ENCODE measurements at regions of chr6 and their contacts with region 1.

Region 1: DNA sequence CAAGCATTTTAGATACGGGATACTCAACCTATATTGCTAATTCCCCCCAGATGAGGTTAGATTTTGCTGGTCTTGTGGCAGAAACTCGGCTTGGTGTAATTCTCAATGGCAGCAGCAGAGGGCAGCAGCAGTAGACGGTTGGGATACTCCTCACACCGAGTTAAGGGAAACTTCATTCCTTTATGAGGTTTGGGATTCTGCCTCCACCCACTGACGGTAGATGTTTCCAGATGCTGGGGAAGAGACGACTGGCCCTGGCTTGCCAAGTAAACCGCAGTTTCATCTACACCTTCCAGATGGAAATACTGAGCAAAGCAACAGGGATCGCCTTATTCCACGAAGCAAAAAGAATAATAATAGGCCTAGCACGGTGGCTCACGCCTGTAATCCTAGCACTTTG is 8.2 kb upstream of the TBC1D7 start:
- DNase-seq: peak; percentile 54 to 70 (median 63)
- H3K4me3 ChIP-seq: no peak overlapping the region
- H3K4me3 Mint-ChIP-seq: no peak overlapping the region
- H3K27ac ChIP-seq: no peak overlapping the region
- H3K27ac Mint-ChIP-seq: peak overlapping the region in 2 of 7 donors; percentile 1 to 13
- H3K4me1 ChIP-seq: no peaks in the 10 kb centered on the region
- H3K4me1 Mint-ChIP-seq: peaks cover 4 to 12% (median 6%) of the 10 kb centered on the region in 4 donors
- H3K27me3 ChIP-seq: no peaks in the 10 kb centered on the region
- H3K27me3 Mint-ChIP-seq: peaks cover 0 to 2% of the 10 kb centered on the region in 2 donors

Region 2: GRCh38 chr6:13538084-13538483 is 201.5 kb after region 1 on chr6:
- CTCF ChIA-PET with region 1: interaction called, 11 read pairs
- POLR2A ChIA-PET with region 1: no interaction called
- intact Hi-C with region 1: loop called (anchors 1 kb)
- DNase-seq: peak in 3 of 5 donors; percentile 10 to 23 (median 17)
- H3K4me3 ChIP-seq: no peak overlapping the region
- H3K4me3 Mint-ChIP-seq: no peak overlapping the region
- H3K27ac ChIP-seq: no peak overlapping the region
- H3K27ac Mint-ChIP-seq: no peak overlapping the region
- H3K4me1 ChIP-seq: no peaks in the 10 kb centered on the region
- H3K4me1 Mint-ChIP-seq: no peaks in the 10 kb centered on the region
- H3K27me3 ChIP-seq: no peaks in the 10 kb centered on the region
- H3K27me3 Mint-ChIP-seq: no peaks in the 10 kb centered on the region

Region 3: GRCh38 chr6:13767121-13767808 is 430.7 kb after region 1 on chr6:
- CTCF ChIA-PET with region 1: no interaction called
- POLR2A ChIA-PET with region 1: no interaction called
- intact Hi-C with region 1: loop called (anchors 1 kb)
- DNase-seq: peak in 4 of 5 donors; percentile 11 to 25 (median 22)
- H3K4me3 ChIP-seq: peak overlapping the region in 1 of 2 donors; percentile 32
- H3K4me3 Mint-ChIP-seq: peak overlapping the region in 7 of 8 donors; percentile 65 to 80 (median 74)
- H3K27ac ChIP-seq: no peak overlapping the region
- H3K27ac Mint-ChIP-seq: peak overlapping the region in 5 of 7 donors; percentile 43 to 89 (median 61)
- H3K4me1 ChIP-seq: peaks cover 19% of the 10 kb centered on the region
- H3K4me1 Mint-ChIP-seq: peaks cover 23 to 44% (median 31%) of the 10 kb centered on the region in 4 donors
- H3K27me3 ChIP-seq: no peaks in the 10 kb centered on the region
- H3K27me3 Mint-ChIP-seq: no peaks in the 10 kb centered on the region